Activated CD4-positive, alpha-beta memory T cell treated with anti-CD3 and anti-CD28 coated beads for 36 hours (primary cell): ENCODE measurements at regions of chr12 and their contacts with region 1.

Region 1: GRCh38 chr12:4809013-4809448 is 88.8 kb downstream of the GALNT8 start:
- DNase-seq: peak; percentile 28
- H3K4me3 Mint-ChIP-seq: peak overlapping the region; percentile 13
- H3K27ac Mint-ChIP-seq: no peak overlapping the region
- H3K4me1 Mint-ChIP-seq: peaks cover 40% of the 10 kb centered on the region
- H3K27me3 Mint-ChIP-seq: peaks cover 23% of the 10 kb centered on the region

Region 2: GRCh38 chr12:4829161-4829792 is 20.2 kb after region 1 on chr12:
- CTCF ChIA-PET with region 1: interaction called, 3 read pairs
- POLR2A ChIA-PET with region 1: no interaction called
- intact Hi-C with region 1: loop called (anchors 1 kb)
- DNase-seq: peak; percentile 18
- H3K4me3 Mint-ChIP-seq: peak overlapping the region; percentile 71
- H3K27ac Mint-ChIP-seq: peak overlapping the region; percentile 85
- H3K4me1 Mint-ChIP-seq: peaks cover 60% of the 10 kb centered on the region
- H3K27me3 Mint-ChIP-seq: no peaks in the 10 kb centered on the region